ENCODE measurements at regions of chr4 and their contacts with region 1.

Region 1: GRCh38 chr4:159201168-159201567 is 98.3 kb downstream of the RAPGEF2 start:
- DNase-seq: no peak
- ATAC-seq: no peak
- H3K4me3 Mint-ChIP-seq: no peak overlapping the region
- H3K27ac Mint-ChIP-seq: no peak overlapping the region
- H3K4me1 Mint-ChIP-seq: peaks cover 16% of the 10 kb centered on the region
- H3K27me3 Mint-ChIP-seq: no peaks in the 10 kb centered on the region

Region 2: DNA sequence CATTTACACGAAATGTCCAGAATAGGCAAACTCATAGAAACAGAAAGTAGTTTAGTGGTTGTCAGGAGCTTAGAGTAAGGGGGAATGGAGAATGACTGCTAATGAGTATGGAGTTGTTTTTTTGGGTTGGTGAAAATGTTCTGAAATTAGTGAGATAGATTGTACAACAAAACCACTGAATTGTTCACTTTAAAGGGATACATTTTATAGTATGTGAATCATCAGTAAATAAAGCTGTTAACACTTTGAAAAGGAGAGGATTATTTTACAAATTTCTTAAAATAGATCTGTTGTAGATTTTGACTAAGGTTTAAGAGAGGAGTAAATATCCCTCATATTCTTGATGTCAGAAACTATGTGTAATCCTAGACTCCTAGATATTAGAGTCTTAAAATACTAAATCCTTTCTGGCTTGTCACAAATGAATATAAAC is 15.6 kb before region 1 on chr4:
- CTCF ChIA-PET with region 1: interaction called, 15 read pairs
- POLR2A ChIA-PET with region 1: no interaction called
- DNase-seq: no peak
- ATAC-seq: no peak
- H3K4me3 Mint-ChIP-seq: no peak overlapping the region
- H3K27ac Mint-ChIP-seq: no peak overlapping the region
- H3K4me1 Mint-ChIP-seq: peaks cover 3% of the 10 kb centered on the region
- H3K27me3 Mint-ChIP-seq: no peaks in the 10 kb centered on the region